ENCODE measurements at regions of chr2 and their contacts with region 1.

Region 1: GRCh38 chr2:102366406-102367112 is 11.0 kb downstream of the IL18R1 start:
- DNase-seq: no peak
- H3K4me3 ChIP-seq: no peak overlapping the region
- H3K27ac ChIP-seq: peak overlapping the region in 2 of 4 donors; percentile 1 to 55
- H3K4me1 ChIP-seq: no peaks in the 10 kb centered on the region
- H3K27me3 ChIP-seq: no peaks in the 10 kb centered on the region
- CTCF ChIP-seq: no peak
- EP300 ChIP-seq: no peak
- POLR2A ChIP-seq: no peak

Region 2: GRCh38 chr2:102166189-102166845 is 200.2 kb before region 1 on chr2:
- in situ Hi-C with region 1: no loop called
- intact Hi-C with region 1: no loop called
- DNase-seq: peak; percentile 27
- H3K4me3 ChIP-seq: no peak overlapping the region
- H3K27ac ChIP-seq: peak overlapping the region; percentile 29 to 36 (median 33)
- H3K4me1 ChIP-seq: peaks cover 5 to 17% (median 11%) of the 10 kb centered on the region in 4 donors
- H3K27me3 ChIP-seq: no peaks in the 10 kb centered on the region
- CTCF ChIP-seq: peak; percentile 44 to 65 (median 59)
- EP300 ChIP-seq: no peak
- POLR2A ChIP-seq: no peak

Region 3: DNA sequence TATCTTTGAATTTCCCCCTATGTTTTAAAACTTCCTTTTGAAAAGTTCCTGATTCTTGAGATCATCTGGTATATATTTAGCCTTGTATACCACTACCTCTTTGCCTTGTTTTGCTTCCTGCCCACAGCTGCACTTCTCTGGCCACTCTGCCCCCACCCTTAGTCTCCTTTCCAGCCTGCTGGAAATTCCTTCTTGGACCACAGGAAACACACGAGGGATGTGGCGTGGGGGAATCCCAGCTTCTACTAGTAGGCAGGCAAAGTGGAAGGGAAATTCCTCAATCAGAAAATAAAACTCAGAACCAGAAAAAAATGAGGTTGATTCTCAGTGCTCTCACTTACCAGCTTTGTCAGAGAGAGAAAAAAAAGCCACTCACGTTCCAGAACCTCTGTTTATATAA is 69.8 kb after region 1 on chr2:
- in situ Hi-C with region 1: no loop called
- intact Hi-C with region 1: loop called (anchors 2 kb)
- DNase-seq: no peak
- H3K4me3 ChIP-seq: no peak overlapping the region
- H3K27ac ChIP-seq: no peak overlapping the region
- H3K4me1 ChIP-seq: no peaks in the 10 kb centered on the region
- H3K27me3 ChIP-seq: no peaks in the 10 kb centered on the region
- CTCF ChIP-seq: no peak
- EP300 ChIP-seq: no peak
- POLR2A ChIP-seq: no peak

Measured in transverse colon (tissue), 4 donors.